ENCODE measurements at regions of chr14 and their contacts with region 1.

Region 1: GRCh38 chr14:39034481-39035296 is 68.3 kb downstream of the SEC23A start:
- DNase-seq: no peak

Region 2: GRCh38 chr14:37903343-37904191 is 1131.1 kb before region 1 on chr14:
- intact Hi-C with region 1: loop called (anchors 10 kb)
- DNase-seq: no peak